ENCODE measurements at regions of chr16 and their contacts with region 1.

Region 1: DNA sequence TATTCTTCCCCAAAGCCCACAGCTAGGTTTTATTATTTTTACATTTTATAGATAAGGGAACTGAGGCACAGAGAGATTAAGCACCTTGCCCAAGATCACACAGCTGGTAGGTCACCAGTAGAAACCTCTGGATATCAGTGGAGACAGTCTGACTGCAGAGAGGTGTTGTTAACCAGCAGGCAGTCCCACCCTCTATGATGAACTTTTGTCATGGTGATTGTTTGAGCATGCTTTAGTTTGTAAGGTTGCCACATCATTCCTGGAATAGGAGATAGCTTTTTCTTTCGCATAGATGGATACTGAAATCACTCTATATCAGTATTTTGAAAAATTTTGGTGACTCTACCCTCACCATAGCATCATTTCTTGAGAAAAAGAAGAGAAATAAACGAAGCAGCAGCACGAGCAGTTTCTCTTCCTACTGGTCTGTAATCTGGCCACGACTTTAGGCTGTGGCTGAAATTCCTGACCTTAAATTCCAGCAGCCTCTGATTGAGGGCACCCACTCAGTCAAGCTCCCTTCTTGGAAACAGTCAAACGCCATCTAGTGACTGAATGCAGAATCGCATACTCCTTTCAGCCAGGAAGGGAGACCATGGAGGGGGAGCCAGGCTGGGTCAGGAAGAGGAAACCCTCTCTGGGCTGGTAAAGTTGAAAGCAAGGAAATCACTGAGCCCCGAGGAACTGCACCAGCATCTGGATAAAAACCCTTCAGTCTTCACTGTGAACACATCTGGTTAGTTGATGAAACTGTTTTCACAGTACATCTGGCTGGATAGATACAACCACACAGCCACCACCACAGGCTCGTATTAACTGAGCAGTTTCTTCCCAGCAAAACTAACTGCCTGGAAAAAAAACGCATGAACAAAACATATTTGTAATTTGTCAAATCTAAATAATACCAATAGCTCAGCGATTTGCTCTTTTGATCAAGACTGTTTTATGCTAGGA is 108.4 kb upstream of the XYLT1 start:
- DNase-seq: peak in 1 of 2 donors; percentile 21
- ATAC-seq: peak; percentile 46 to 75 (median 55)
- H3K4me3 ChIP-seq: no peak overlapping the region
- H3K27ac ChIP-seq: no peak overlapping the region
- H3K4me1 ChIP-seq: no peaks in the 10 kb centered on the region
- H3K27me3 ChIP-seq: no peaks in the 10 kb centered on the region
- CTCF ChIP-seq: peak; percentile 76

Region 2: DNA sequence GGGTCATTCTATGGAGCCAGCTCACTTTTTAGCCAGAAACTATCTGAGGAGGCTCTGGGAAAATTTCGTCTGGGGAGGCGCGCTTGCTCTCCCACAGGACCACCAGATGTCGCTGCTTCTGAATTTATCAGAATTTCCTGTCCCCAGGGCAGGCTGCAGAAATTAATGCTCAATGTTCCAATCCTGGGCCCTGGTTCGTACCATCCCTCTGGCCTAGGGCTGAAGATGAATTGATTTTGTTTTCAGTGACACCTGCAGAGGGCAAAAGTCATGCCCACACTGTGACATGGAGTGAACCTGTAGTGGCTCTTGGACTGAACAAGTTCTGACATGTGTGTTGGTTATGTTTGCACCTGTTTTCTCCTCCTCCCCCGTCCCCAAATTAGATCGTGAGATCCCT is 717.7 kb before region 1 on chr16:
- intact Hi-C with region 1: loop called in 1 of 2 experiments (anchors 5 kb)
- DNase-seq: peak in 1 of 2 donors; percentile 19
- ATAC-seq: peak in 1 of 4 donors; percentile 21
- H3K4me3 ChIP-seq: no peak overlapping the region
- H3K27ac ChIP-seq: no peak overlapping the region
- H3K4me1 ChIP-seq: no peaks in the 10 kb centered on the region
- H3K27me3 ChIP-seq: peaks cover 0 to 4% (median 2%) of the 10 kb centered on the region in 3 donors
- CTCF ChIP-seq: peak; percentile 62